WTC11 (cell line): ENCODE measurements at regions of chr3 and their contacts with region 1.

Region 1: GRCh38 chr3:185770109-185770508 is 54.7 kb downstream of the IGF2BP2 start:
- DNase-seq: no peak
- ATAC-seq: peak; percentile 28
- H3K4me3 Mint-ChIP-seq: no peak overlapping the region
- H3K27ac Mint-ChIP-seq: peak overlapping the region; percentile 66
- H3K4me1 Mint-ChIP-seq: peaks cover 76% of the 10 kb centered on the region
- H3K27me3 Mint-ChIP-seq: no peaks in the 10 kb centered on the region
- CTCF ChIP-seq: no peak

Region 2: GRCh38 chr3:185733980-185734724 is 36.0 kb before region 1 on chr3:
- CTCF ChIA-PET with region 1: interaction called, 79 read pairs
- POLR2A ChIA-PET with region 1: interaction called, 6 read pairs
- DNase-seq: peak; percentile 65
- ATAC-seq: peak; percentile 95
- H3K4me3 Mint-ChIP-seq: no peak overlapping the region
- H3K27ac Mint-ChIP-seq: peak overlapping the region; percentile 95
- H3K4me1 Mint-ChIP-seq: peaks cover 65% of the 10 kb centered on the region
- H3K27me3 Mint-ChIP-seq: no peaks in the 10 kb centered on the region
- CTCF ChIP-seq: peak; percentile 46; the same call in 1 of the 2 replicates

Region 3: GRCh38 chr3:185758912-185759311 is 11.2 kb before region 1 on chr3:
- CTCF ChIA-PET with region 1: interaction called, 30 read pairs
- POLR2A ChIA-PET with region 1: no interaction called
- DNase-seq: no peak
- ATAC-seq: no peak
- H3K4me3 Mint-ChIP-seq: no peak overlapping the region
- H3K27ac Mint-ChIP-seq: peak overlapping the region; percentile 17
- H3K4me1 Mint-ChIP-seq: peaks cover 91% of the 10 kb centered on the region
- H3K27me3 Mint-ChIP-seq: no peaks in the 10 kb centered on the region
- CTCF ChIP-seq: no peak

Region 4: GRCh38 chr3:185781759-185782158 is 11.7 kb after region 1 on chr3:
- CTCF ChIA-PET with region 1: interaction called, 35 read pairs
- POLR2A ChIA-PET with region 1: interaction called, 3 read pairs
- DNase-seq: no peak
- ATAC-seq: no peak
- H3K4me3 Mint-ChIP-seq: no peak overlapping the region
- H3K27ac Mint-ChIP-seq: peak overlapping the region; percentile 62; the same call in 1 of the 2 replicates
- H3K4me1 Mint-ChIP-seq: peaks cover 92% of the 10 kb centered on the region
- H3K27me3 Mint-ChIP-seq: no peaks in the 10 kb centered on the region
- CTCF ChIP-seq: no peak